Lower lobe of right lung (tissue), 2 donors: ENCODE measurements at regions of chr2 and their contacts with region 1.

Region 1: DNA sequence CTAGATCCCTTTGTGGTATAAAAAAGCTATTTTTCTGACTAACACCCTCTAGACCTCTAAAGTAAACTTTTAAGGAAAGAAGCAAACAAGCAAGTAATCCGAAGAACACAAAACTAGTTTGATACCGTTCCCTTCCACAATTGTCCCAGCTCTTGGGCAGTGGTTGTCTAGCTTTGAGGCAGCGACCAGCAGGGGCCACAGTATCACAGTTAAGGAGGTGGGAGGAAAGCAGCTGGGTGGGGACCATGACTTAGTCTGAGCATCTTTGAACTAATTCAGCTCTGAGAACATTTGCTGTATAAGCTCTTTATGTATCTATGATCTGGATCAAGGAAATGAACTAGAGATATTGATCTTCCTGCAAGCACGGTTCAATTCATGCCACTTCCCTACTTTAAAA is 51.0 kb downstream of the SF3B1 start:
- DNase-seq: no peak
- ATAC-seq: no peak
- H3K4me3 ChIP-seq: no peak overlapping the region
- H3K27ac ChIP-seq: no peak overlapping the region
- H3K4me1 ChIP-seq: no peaks in the 10 kb centered on the region
- H3K27me3 ChIP-seq: no peaks in the 10 kb centered on the region
- CTCF ChIP-seq: no peak

Region 2: DNA sequence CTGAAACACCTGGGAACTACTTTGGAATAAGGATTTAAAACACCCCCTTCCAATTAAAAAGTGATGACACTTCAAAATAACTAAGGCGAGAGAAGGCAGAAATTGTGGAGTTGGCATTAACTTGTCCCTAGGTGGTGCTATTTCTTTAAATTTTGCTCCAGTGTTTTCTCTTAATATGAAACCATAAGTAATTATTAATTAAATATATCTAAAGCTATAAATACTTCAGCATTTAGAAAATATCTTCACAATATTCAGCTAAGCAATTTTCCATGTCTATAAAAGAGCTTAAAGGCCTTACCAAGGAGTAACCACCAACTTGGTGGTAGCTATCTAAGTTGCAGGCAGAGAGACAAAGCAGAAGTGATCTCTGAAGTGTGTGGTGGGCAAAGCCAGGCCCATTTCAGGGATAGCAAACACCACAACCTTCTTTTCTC is 270.5 kb before region 1 on chr2:
- intact Hi-C with region 1: loop called (anchors 10 kb)
- DNase-seq: no peak
- ATAC-seq: peak; percentile 34 to 52
- H3K4me3 ChIP-seq: no peak overlapping the region
- H3K27ac ChIP-seq: no peak overlapping the region
- H3K4me1 ChIP-seq: peaks cover 3% of the 10 kb centered on the region
- H3K27me3 ChIP-seq: no peaks in the 10 kb centered on the region
- CTCF ChIP-seq: peak; percentile 69